Psoas muscle (tissue), 8 donors: ENCODE measurements at regions of chr3 and their contacts with region 1.

Region 1: GRCh38 chr3:47288966-47289910 is 6.5 kb downstream of the KLHL18 start:
- DNase-seq: no peak
- ATAC-seq: no peak
- H3K4me3 ChIP-seq: no peak overlapping the region
- H3K27ac ChIP-seq: no peak overlapping the region
- H3K4me1 ChIP-seq: peaks cover 19% of the 10 kb centered on the region
- H3K27me3 ChIP-seq: no peaks in the 10 kb centered on the region
- CTCF ChIP-seq: no peak

Region 2: GRCh38 chr3:46935168-46935858 is 353.9 kb before region 1 on chr3:
- intact Hi-C with region 1: no loop called
- DNase-seq: peak; percentile 83 to 93
- ATAC-seq: peak; percentile 92 to 95 (median 94)
- H3K4me3 ChIP-seq: no peak overlapping the region
- H3K27ac ChIP-seq: peak overlapping the region; percentile 77
- H3K4me1 ChIP-seq: peaks cover 89% of the 10 kb centered on the region
- H3K27me3 ChIP-seq: no peaks in the 10 kb centered on the region
- CTCF ChIP-seq: peak; percentile 68

Region 3: DNA sequence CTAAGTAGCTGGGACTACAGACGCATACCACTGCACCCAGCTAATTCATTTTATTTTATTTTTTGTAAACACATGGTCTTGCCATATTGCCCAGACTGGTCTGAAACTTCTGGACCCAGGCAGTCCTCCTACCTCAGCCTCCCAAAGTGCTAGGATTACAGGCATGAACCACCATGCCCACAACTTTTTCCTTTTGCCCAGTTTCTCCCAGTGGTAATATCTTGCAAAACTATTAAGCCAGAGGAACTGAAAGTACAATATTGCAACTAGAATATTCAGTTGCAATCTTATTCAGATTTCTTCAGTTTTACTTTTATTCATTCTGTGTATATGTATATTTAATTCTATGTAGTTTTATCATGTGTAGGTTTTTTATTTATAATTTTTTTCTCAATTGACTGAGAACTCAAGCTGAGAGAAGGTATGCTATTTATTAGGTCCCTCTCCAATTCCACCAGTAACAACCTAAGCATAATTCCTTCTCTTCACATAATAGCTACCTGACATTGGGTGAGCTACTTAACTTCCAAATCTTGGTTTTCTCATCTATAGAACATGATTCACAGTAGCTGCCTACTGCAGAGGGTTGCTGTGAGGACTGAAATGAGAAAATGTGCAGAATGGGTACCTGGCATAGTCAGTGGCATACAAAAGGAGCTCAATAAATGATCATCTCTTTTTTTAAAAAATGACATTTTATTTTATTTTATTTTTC is 24.3 kb after region 1 on chr3:
- intact Hi-C with region 1: loop called in 1 of 2 experiments (anchors 2 kb)
- DNase-seq: no peak
- ATAC-seq: no peak
- H3K4me3 ChIP-seq: no peak overlapping the region
- H3K27ac ChIP-seq: no peak overlapping the region
- H3K4me1 ChIP-seq: peaks cover 13% of the 10 kb centered on the region
- H3K27me3 ChIP-seq: no peaks in the 10 kb centered on the region
- CTCF ChIP-seq: no peak

Region 4: DNA sequence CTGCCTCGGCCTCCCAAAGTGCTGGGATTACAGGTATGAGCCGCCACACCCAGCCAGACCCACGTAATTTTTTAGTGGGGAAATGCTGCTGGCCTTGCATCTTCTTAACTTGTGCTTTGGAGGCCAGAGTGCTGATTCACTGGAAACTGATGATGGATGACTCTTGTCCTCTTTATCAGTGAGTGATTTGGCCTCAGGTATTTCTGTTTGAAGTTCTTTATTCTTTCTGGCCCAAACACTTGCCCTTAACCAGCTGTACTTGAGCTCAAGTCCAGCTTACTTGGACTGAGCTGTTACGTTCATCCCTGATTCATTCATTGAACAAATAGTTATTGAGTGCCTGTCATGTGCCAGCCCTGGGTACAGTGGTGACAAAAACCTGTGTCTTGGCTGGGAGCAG is 95.8 kb after region 1 on chr3:
- intact Hi-C with region 1: no loop called
- DNase-seq: no peak
- ATAC-seq: no peak
- H3K4me3 ChIP-seq: no peak overlapping the region
- H3K27ac ChIP-seq: peak overlapping the region; percentile 18
- H3K4me1 ChIP-seq: peaks cover 32% of the 10 kb centered on the region
- H3K27me3 ChIP-seq: no peaks in the 10 kb centered on the region
- CTCF ChIP-seq: no peak

Region 5: GRCh38 chr3:47622671-47623461 is 333.6 kb after region 1 on chr3:
- intact Hi-C with region 1: no loop called
- DNase-seq: no peak
- ATAC-seq: no peak
- H3K4me3 ChIP-seq: no peak overlapping the region
- H3K27ac ChIP-seq: no peak overlapping the region
- H3K4me1 ChIP-seq: no peaks in the 10 kb centered on the region
- H3K27me3 ChIP-seq: no peaks in the 10 kb centered on the region
- CTCF ChIP-seq: no peak